Panc1 (cell line): ENCODE measurements at regions of chr1 and their contacts with region 1.

Region 1: GRCh38 chr1:39288735-39289465 is 84.4 kb downstream of the MACF1 start:
- DNase-seq: no peak
- ATAC-seq: peak; percentile 51; the same call in 1 of the 2 replicates
- H3K4me3 ChIP-seq: no peak overlapping the region
- H3K27ac ChIP-seq: no peak overlapping the region
- H3K4me1 ChIP-seq: no peaks in the 10 kb centered on the region
- H3K27me3 ChIP-seq: no peaks in the 10 kb centered on the region
- CTCF ChIP-seq: no peak

Region 2: GRCh38 chr1:39326832-39327231 is 37.9 kb after region 1 on chr1:
- CTCF ChIA-PET with region 1: no interaction called
- POLR2A ChIA-PET with region 1: interaction called, 16 read pairs
- in situ Hi-C with region 1: no loop called
- intact Hi-C with region 1: no loop called
- DNase-seq: no peak
- ATAC-seq: no peak
- H3K4me3 ChIP-seq: no peak overlapping the region
- H3K27ac ChIP-seq: no peak overlapping the region
- H3K4me1 ChIP-seq: no peaks in the 10 kb centered on the region
- H3K27me3 ChIP-seq: no peaks in the 10 kb centered on the region
- CTCF ChIP-seq: no peak